Dorsolateral prefrontal cortex (tissue), 120 donors: ENCODE measurements at regions of chr16 and their contacts with region 1.

Region 1: GRCh38 chr16:57720142-57720575 is 15.4 kb upstream of the KATNB1 start:
- DNase-seq: peak in 6 of 10 donors; percentile 31 to 64 (median 50)
- H3K4me3 ChIP-seq: no peak overlapping the region
- H3K27ac ChIP-seq: no peak overlapping the region
- H3K27me3 ChIP-seq: peaks cover 0 to 3% (median 0%) of the 10 kb centered on the region in 45 donors
- CTCF ChIP-seq: peak in 52 of 56 donors; percentile 20 to 73 (median 51)

Region 2: DNA sequence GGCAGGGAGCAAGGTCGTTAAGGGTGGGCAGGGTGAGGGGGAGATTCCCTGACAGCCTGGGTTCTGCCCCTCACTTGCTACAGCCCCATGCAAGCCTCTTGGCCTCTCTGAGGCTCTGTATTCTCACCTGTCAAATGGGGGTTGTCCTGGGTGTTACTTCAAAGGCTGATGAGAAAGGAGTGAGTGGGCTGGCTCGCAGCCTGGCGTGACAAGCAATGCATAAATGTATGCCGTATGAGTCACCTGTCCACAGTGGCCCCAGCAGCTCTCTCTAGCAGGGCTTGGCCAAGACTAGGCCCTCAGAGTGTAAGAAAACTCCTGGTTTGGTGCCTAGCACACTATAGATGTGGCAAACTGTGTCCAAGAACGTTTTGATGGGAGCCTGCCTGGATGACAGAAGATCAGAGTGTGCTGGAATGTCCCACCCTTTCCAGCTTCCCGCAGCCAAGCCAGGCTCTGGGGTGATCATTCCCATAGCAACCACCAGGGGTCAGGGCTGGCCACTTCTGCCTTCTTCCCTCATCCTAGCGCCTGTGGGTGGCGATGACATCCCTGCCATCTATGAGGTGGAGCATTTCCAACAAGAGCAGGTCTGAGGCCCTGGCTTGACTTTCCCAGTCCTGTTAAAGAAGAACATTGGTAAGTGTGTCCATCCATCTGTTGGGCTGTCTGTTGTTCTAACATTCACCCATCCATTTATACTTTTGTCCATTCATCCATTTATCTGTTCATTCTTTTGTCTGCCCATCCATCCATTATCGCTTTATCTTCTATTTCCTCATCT is 128.9 kb before region 1 on chr16:
- intact Hi-C with region 1: loop called in 1 of 2 experiments (anchors 5 kb)
- DNase-seq: peak in 9 of 10 donors; percentile 55 to 78 (median 71)
- H3K4me3 ChIP-seq: no peak overlapping the region
- H3K27ac ChIP-seq: no peak overlapping the region
- H3K27me3 ChIP-seq: no peaks in the 10 kb centered on the region
- CTCF ChIP-seq: peak; percentile 58 to 98 (median 92)

Region 3: GRCh38 chr16:57600048-57600835 is 119.9 kb before region 1 on chr16:
- intact Hi-C with region 1: loop called in 1 of 2 experiments (anchors 10 kb)
- DNase-seq: peak in 5 of 10 donors; percentile 12 to 67 (median 44)
- H3K4me3 ChIP-seq: no peak overlapping the region
- H3K27ac ChIP-seq: peak overlapping the region in 1 of 59 donors; percentile 3
- H3K27me3 ChIP-seq: peaks cover 0 to 3% (median 0%) of the 10 kb centered on the region in 45 donors
- CTCF ChIP-seq: peak; percentile 26 to 82 (median 64)